BJ (cell line): ENCODE measurements at regions of chrX and their contacts with region 1.

Region 1: GRCh38 chrX:48493890-48494364 is 14.9 kb upstream of the PORCN start:
- DNase-seq: no peak
- H3K4me3 ChIP-seq: no peak overlapping the region
- H3K27me3 ChIP-seq: no peaks in the 10 kb centered on the region
- CTCF ChIP-seq: peak; percentile 21; the same call in 1 of the 2 replicates

Region 2: DNA sequence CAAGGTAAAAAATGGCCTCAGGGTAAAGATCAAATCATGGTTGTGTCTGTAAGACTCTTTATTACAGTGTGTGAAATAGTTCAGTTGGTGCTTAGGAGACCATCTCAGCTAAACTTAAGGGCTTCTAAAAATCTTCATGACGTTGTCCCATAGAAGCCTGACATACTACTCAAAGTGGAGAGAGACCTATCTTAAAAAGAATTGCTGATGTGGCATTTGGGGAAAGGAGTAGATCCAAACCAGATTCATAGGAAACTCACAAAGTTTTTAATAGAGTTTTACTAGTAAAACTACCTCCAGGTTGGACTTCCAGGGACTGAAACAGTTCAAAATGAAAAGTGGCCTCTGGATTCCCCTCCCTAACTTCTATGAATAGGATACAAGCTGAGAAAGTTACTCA is 575.7 kb before region 1 on chrX:
- CTCF ChIA-PET with region 1: no interaction called
- POLR2A ChIA-PET with region 1: no interaction called
- DNase-seq: no peak
- H3K4me3 ChIP-seq: no peak overlapping the region
- H3K27me3 ChIP-seq: no peaks in the 10 kb centered on the region
- CTCF ChIP-seq: no peak

Region 3: DNA sequence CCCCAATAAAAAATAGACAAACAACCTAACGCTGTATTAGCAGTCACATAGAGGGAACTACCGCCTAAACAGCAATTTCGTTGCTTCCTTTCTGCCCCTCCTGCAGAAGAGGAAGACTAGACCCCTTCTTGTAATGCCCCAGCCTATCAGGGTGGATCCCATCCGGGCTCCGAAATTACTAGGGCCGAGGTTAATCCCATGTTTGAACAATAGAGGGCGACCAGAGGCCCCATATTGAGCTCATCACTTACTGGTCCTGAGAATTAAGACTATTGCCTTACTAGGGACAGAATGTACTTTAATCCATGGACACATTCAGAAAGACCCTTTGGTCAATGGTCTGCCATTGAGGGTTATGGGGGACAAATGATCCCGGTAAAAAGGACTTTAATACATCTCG is 410.7 kb before region 1 on chrX:
- CTCF ChIA-PET with region 1: interaction called, 25 read pairs
- POLR2A ChIA-PET with region 1: no interaction called
- DNase-seq: peak; percentile 2
- H3K4me3 ChIP-seq: no peak overlapping the region
- H3K27me3 ChIP-seq: no peaks in the 10 kb centered on the region
- CTCF ChIP-seq: peak; percentile 64

Region 4: GRCh38 chrX:48508400-48509244 is 14.7 kb after region 1 on chrX and contains the start of gene PORCN:
- CTCF ChIA-PET with region 1: no interaction called
- POLR2A ChIA-PET with region 1: no interaction called
- DNase-seq: no peak
- H3K4me3 ChIP-seq: peak within 1 kb of the TSS; percentile 60
- H3K27me3 ChIP-seq: no peaks in the 10 kb centered on the region
- CTCF ChIP-seq: no peak
- polyA plus RNA-seq, gene PORCN: 9.9 and 18.0 TPM in 2 replicates

Region 5: GRCh38 chrX:48606091-48606490 is 112.2 kb after region 1 on chrX:
- CTCF ChIA-PET with region 1: no interaction called
- POLR2A ChIA-PET with region 1: no interaction called
- DNase-seq: no peak
- H3K4me3 ChIP-seq: no peak overlapping the region
- H3K27me3 ChIP-seq: no peaks in the 10 kb centered on the region
- CTCF ChIP-seq: no peak; the same call in 1 of the 2 replicates